ENCODE measurements at regions of chr19 and their contacts with region 1.

Region 1: GRCh38 chr19:32068793-32069192 is 276.6 kb upstream of the ZNF507 start:
- DNase-seq: no peak
- ATAC-seq: no peak
- H3K4me3 ChIP-seq: no peak overlapping the region
- H3K27ac ChIP-seq: no peak overlapping the region
- H3K4me1 ChIP-seq: no peaks in the 10 kb centered on the region
- H3K27me3 ChIP-seq: peaks cover 0 to 3% of the 10 kb centered on the region in 2 experiments; a peak in 2 of 5 replicates
- CTCF ChIP-seq: no peak
- EP300 ChIP-seq: no peak
- POLR2A ChIP-seq: no peak
- RAD21 ChIP-seq: no peak

Region 2: DNA sequence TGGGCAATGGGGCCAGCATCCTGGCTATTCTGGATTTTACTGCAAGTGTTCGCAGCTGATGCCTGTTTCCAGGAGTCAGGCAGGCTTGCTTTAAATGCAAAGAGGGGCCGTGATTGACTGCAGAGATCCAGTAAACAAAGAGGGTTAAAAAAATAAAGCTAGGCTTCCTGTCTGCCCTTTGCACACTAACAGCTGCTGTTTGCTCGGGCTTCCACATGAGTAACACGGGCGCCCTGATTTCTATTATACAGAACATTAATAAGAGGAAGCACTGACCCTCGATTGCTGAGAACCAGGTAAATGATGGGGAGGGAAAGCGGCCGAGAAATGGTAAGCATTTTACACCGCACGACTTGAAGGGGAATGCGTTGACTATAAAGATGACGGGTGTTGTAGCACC is 22.4 kb after region 1 on chr19:
- CTCF ChIA-PET with region 1: no interaction called
- POLR2A ChIA-PET with region 1: no interaction called
- in situ Hi-C with region 1: no loop called
- intact Hi-C with region 1: loop called (anchors 1 kb)
- DNase-seq: no peak
- ATAC-seq: no peak
- H3K4me3 ChIP-seq: no peak overlapping the region
- H3K27ac ChIP-seq: no peak overlapping the region
- H3K4me1 ChIP-seq: no peaks in the 10 kb centered on the region
- H3K27me3 ChIP-seq: no peaks in the 10 kb centered on the region
- CTCF ChIP-seq: no peak
- EP300 ChIP-seq: no peak
- POLR2A ChIP-seq: no peak
- RAD21 ChIP-seq: no peak

Measured in HepG2 (cell line).